PC-3 (cell line): ENCODE measurements at regions of chr9 and their contacts with region 1.

Region 1: DNA sequence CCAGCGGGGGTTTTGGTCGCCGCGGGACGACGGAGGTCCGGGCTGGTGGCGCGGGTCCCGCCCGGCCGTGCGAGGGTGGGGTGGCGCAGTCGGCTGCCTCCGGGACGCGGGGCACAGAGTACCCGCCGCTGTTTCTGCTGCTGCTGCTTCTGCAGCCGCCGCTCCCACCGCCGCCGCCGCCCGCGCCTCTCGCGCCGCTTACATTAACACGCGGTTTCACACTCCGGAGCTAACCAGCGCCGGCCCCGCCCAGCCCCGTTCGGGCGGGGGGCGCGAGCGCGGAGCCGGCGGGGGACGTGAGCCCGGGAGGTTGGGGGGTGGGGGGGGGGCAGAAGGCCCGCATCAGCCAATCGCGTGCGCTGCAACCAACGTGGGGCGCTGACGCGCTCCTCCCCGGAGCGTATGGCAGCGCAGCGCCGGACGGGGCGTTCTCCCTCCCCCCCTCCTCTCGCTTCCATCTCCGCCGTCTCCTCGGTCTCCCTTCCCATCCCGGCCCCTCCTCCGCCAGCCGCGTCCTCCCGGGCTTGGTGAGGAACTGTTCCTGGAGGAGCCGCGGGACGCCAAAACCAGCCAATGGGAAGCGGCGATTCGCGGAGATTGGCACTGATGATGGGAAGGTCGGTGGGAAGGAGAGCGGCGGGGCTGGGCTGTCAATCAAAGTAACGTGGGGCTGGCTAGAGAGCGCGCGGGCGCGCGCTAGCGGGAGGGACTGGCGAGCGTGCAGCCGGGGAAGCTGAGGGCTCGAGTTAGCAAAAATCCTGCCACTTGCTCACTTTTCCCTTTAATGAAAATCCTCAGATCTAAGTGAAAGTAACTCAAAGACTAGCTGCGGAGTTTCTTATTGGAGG is at the start of gene TLE1:
- DNase-seq: peak; percentile 97
- ATAC-seq: peak; percentile 69
- H3K4me3 ChIP-seq: peak within 1 kb of the TSS; percentile 81
- H3K27ac ChIP-seq: peak within 1 kb of the TSS; percentile 81
- H3K4me1 ChIP-seq: peaks cover 24% of the 10 kb centered on the region
- H3K27me3 ChIP-seq: no peaks in the 10 kb centered on the region
- CTCF ChIP-seq: no peak
- total RNA-seq, gene TLE1: 49.0 and 55.6 TPM in 2 replicates

Region 2: GRCh38 chr9:80899208-80899607 is 790.4 kb before region 1 on chr9:
- CTCF ChIA-PET with region 1: no interaction called
- POLR2A ChIA-PET with region 1: no interaction called
- intact Hi-C with region 1: loop called (anchors 10 kb)
- DNase-seq: peak; percentile 77
- ATAC-seq: peak; percentile 77
- H3K4me3 ChIP-seq: no peak overlapping the region
- H3K27ac ChIP-seq: peak overlapping the region; percentile 35
- H3K4me1 ChIP-seq: peaks cover 13% of the 10 kb centered on the region
- H3K27me3 ChIP-seq: no peaks in the 10 kb centered on the region
- CTCF ChIP-seq: no peak

Region 3: DNA sequence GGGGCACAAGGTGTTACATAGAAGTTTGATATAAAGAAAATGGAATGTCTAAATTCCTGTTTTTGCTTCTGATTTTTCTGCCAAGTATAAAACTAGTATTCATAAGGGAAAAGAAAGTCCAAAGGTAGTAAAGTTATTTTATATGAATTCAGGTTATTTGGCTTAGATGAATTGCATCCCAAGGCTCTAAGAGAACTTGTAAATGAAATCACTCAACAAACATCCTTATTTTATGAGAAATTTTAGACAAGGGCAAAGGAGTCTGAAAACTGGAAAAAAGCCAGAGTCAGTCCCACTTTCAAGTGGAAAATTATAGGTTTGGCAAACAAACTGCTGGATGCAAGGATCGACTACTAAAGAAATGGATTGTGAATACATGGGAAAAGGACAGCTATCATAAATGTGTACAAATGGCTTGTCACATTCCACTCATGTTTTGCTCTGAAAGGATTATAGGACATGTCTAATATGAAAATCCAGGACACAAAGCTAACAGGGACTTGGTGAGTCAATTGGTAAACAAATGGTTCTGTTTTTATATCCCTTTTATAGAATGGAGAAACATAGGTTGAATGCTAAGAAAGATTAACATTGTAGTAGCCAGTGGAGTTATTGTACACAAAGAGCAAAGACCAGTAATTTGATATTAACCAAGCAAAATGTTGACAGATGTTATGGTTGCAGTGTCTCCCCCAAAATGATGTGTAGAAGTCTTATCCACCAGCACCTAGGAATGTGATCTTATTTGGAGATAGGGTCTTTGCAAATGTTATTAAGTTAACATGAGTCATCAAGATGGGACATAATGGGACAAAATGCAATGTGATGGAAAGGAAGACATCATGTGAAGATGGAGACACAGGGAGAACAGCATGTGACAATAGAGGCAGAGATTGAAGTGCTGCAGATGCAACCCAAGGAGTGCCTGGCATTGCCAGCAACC is 495.9 kb before region 1 on chr9:
- CTCF ChIA-PET with region 1: no interaction called
- POLR2A ChIA-PET with region 1: no interaction called
- intact Hi-C with region 1: loop called (anchors 5 kb)
- DNase-seq: peak; percentile 79
- ATAC-seq: peak; percentile 88
- H3K4me3 ChIP-seq: no peak overlapping the region
- H3K27ac ChIP-seq: peak overlapping the region; percentile 84
- H3K4me1 ChIP-seq: peaks cover 25% of the 10 kb centered on the region
- H3K27me3 ChIP-seq: no peaks in the 10 kb centered on the region
- CTCF ChIP-seq: no peak

Region 4: DNA sequence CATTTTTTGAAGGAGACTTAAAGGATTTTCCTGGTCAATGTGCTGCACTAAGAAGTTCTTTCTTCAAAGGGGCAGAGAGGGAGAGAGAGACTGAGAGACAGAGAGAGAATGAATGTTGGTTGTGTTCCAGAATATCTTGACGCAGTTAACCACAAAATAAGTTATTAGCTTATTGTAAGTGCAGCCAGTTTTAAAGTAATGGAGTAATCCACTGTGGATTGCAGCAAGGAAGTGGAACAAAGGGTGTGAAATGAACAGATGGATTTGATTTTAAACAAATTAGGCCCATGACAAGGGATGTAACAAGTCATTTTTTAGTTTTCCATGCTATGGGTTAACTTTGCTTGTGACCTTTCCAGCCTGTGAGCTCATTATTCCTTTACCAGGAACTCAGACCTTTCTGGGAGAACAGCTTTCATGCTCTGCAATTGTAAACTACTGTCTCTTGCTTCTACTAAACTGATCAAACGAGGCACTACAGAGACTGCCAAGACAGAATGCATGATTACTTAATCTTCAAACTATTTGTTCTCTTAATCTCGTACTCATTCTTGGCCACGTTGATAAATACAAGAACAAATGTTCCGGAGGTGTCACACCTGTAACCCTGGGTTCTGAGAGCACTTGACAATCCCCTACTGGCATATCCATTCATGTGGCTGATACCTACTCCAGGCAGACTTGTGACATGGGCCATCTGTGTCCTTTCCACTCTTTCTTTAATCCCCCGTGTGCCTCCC is 131.3 kb before region 1 on chr9:
- CTCF ChIA-PET with region 1: no interaction called
- POLR2A ChIA-PET with region 1: no interaction called
- intact Hi-C with region 1: no loop called
- DNase-seq: peak; percentile 24
- ATAC-seq: no peak
- H3K4me3 ChIP-seq: no peak overlapping the region
- H3K27ac ChIP-seq: no peak overlapping the region
- H3K4me1 ChIP-seq: peaks cover 44% of the 10 kb centered on the region
- H3K27me3 ChIP-seq: no peaks in the 10 kb centered on the region
- CTCF ChIP-seq: no peak

Region 5: DNA sequence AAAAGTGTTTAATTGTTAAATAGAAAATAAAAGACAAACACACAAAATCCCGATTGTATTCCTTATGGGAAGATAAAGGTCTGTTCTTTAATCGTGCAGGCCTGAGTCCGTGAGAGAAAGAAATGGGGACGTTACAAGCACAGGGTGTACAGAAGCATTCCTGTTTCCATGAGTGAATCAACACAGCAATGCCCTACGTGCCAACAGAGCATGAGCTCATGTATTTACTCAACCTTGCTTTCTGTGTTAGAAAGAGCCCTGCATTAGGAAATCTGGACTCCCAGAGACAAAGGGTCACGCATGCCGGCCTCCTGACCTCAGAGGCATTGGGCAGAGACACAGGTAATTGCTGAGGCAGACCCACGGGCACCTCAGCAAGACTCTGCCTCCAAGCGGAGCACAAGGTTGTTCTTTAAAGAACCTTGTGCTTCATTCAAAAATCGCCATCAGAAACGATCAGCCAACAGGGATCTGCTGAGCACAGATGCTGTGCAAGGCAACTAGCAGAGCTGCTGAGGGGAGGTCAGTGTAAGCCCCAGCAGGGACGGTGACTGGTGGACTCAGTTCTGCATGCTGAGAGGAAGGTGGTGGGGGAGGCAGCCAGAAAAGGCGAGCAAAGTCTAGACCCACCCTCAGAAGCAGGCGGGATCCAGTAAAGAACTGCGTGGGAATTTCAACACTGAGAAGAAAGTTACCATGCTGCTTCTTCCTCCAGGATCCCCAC is 101.3 kb before region 1 on chr9:
- CTCF ChIA-PET with region 1: no interaction called
- POLR2A ChIA-PET with region 1: no interaction called
- intact Hi-C with region 1: loop called (anchors 5 kb)
- DNase-seq: peak; percentile 82
- ATAC-seq: peak; percentile 92
- H3K4me3 ChIP-seq: peak overlapping the region; percentile 48; the same call in 1 of the 2 replicates
- H3K27ac ChIP-seq: peak overlapping the region; percentile 91
- H3K4me1 ChIP-seq: peaks cover 29% of the 10 kb centered on the region
- H3K27me3 ChIP-seq: no peaks in the 10 kb centered on the region
- CTCF ChIP-seq: no peak

Region 6: DNA sequence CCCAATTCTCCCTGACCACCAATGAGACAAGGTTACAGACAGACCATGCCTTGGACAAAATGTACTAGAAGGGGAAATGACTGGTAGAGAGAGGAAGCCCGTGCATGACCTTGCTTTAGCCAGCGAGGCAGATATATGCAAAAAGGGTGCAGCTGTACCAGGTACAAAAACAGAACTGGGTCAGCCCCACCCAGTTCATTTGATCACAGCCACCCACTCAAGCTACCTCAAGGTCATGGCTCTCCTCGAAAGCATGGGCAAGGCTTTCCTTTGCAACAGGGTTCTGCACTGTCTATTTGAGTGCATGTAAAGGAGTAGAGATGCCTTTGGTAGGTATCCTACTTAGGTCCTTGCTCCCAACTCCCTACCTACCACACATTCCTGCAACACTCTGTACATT is 33.6 kb before region 1 on chr9:
- CTCF ChIA-PET with region 1: no interaction called
- POLR2A ChIA-PET with region 1: no interaction called
- intact Hi-C with region 1: loop called (anchors 2 kb)
- DNase-seq: no peak
- ATAC-seq: no peak
- H3K4me3 ChIP-seq: no peak overlapping the region
- H3K27ac ChIP-seq: no peak overlapping the region
- H3K4me1 ChIP-seq: peaks cover 42% of the 10 kb centered on the region
- H3K27me3 ChIP-seq: no peaks in the 10 kb centered on the region
- CTCF ChIP-seq: no peak

Region 7: DNA sequence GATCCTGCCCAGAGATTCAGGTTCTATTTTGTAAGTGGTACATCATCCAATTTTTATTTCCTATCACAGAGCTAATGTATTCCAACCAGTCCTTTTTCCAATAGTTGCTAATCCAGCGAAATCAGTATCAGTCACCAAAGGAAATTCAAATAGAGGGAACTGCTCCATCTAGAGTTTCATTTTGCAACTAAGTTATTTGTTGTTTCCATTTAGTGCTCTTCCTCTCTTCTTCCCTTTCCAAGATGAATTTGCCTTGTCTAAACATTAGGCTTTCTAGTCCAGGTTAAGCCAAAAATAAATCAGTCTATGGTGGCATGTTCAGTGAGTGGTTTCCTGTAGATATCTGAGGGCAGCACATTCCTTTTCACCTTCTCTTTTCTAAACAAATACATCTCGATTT is 158.9 kb after region 1 on chr9:
- CTCF ChIA-PET with region 1: no interaction called
- POLR2A ChIA-PET with region 1: no interaction called
- intact Hi-C with region 1: loop called (anchors 2 kb)
- DNase-seq: peak; percentile 44
- ATAC-seq: peak; percentile 31
- H3K4me3 ChIP-seq: no peak overlapping the region
- H3K27ac ChIP-seq: 0 out of 2 replicates have a peak overlapping the region, but pooled peaks have one; percentile 9
- H3K4me1 ChIP-seq: peaks cover 23% of the 10 kb centered on the region
- H3K27me3 ChIP-seq: no peaks in the 10 kb centered on the region
- CTCF ChIP-seq: peak; percentile 59